Testis (tissue), 5 donors: ENCODE measurements at regions of chr19 and their contacts with region 1.

Region 1: DNA sequence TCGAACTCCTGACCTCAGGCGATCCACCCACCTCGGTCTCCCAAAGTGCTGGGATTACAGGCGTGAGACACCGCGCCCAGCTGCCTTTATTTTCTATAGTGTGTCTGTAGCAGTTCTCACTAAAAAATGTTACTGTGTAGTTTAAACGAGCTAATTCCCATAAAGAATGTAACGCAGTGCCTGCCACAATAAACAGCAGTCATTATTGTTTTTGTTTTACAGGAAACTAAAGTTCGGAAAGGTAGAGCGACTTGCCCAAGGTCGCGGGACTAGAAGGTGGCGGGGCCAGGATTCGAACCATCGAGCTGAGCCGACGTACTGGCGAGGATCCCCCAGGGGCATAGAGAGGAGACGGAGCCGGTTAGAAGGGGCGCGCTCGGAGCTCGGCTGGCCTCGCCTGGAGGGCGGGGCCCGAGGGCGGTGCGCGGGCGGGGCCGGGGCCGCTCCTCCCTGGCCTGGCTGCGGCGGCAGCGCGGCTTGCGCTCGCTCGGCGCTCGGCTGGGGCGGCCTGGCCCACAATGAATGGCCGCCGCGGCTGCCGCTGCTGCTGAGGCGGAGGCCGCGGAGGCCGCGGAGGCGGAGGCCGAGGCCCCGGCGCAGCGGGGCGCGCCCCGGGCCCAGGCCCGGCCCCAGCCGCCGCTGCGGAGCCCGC is at the start of gene NACC1:
- DNase-seq: peak; percentile 93
- H3K4me3 ChIP-seq: peak within 1 kb of the TSS; percentile 78 to 98
- H3K27ac ChIP-seq: peak within 1 kb of the TSS; percentile 62 to 64
- H3K4me1 ChIP-seq: peaks cover 26% of the 10 kb centered on the region
- H3K27me3 ChIP-seq: no peaks in the 10 kb centered on the region
- CTCF ChIP-seq: no peak
- POLR2A ChIP-seq: no peak
- total RNA-seq, gene NACC1: 75.9 to 102 TPM

Region 2: GRCh38 chr19:13051267-13052165 is 66.4 kb before region 1 on chr19:
- intact Hi-C with region 1: no loop called
- DNase-seq: peak; percentile 81
- H3K4me3 ChIP-seq: no peak overlapping the region
- H3K27ac ChIP-seq: peak overlapping the region in 1 of 2 donors; percentile 90
- H3K4me1 ChIP-seq: peaks cover 71% of the 10 kb centered on the region
- H3K27me3 ChIP-seq: no peaks in the 10 kb centered on the region
- CTCF ChIP-seq: no peak
- POLR2A ChIP-seq: no peak

Region 3: DNA sequence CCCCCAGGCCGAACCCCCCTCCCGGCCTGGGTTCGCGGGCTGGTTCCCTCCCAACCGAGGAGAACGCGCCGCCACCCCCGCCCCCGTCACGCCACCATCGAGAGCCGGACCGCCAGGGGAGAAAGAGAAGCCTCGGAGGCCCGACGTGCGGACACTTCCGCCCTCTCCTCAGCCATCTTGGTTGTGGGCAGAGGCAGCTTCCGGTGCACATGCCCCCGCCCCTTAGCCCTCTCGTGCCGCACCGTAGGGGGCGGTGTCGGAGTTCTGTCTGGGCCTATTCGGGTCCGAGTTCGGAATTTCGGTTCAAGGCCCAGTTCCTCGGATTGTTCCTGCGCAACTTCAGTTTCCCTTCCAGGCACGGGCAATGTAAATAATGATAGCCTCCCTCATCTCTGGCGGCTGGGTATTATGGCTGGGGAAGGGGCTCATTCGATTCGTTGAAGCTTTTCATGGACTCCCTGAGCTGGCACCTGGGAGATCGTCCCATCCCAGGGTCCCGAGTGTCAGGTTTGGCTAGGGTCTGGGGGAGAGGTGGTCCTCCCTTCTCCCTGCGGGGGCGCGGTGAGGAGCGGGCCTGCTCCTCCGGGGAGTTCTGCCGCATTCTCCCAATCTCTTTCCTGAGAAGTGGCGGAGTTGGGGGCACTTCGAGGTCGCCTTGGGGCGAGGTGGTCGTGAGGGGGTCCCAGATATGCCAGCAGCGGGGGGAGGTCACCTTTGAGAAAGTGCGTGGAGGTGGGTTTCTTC is 32.5 kb after region 1 on chr19 and contains the starts of genes IER2 and STX10:
- intact Hi-C with region 1: loop called (anchors 5 kb)
- DNase-seq: peak; percentile 97
- H3K4me3 ChIP-seq: peak within 1 kb of the TSS; percentile 73 to 78
- H3K27ac ChIP-seq: peak within 1 kb of the TSS; percentile 83 to 96
- H3K4me1 ChIP-seq: peaks cover 11% of the 10 kb centered on the region
- H3K27me3 ChIP-seq: no peaks in the 10 kb centered on the region
- CTCF ChIP-seq: peak; percentile 40 to 81 (median 64)
- POLR2A ChIP-seq: no peak
- total RNA-seq, gene IER2: 18.1 to 29.4 TPM
- total RNA-seq, gene STX10: 27.2 to 37.6 TPM

Region 4: GRCh38 chr19:13207846-13208671 is 90.2 kb after region 1 on chr19:
- intact Hi-C with region 1: no loop called
- DNase-seq: peak; percentile 39
- H3K4me3 ChIP-seq: peak overlapping the region; percentile 42 to 51
- H3K27ac ChIP-seq: peak overlapping the region; percentile 24 to 66
- H3K4me1 ChIP-seq: no peaks in the 10 kb centered on the region
- H3K27me3 ChIP-seq: no peaks in the 10 kb centered on the region
- CTCF ChIP-seq: no peak
- POLR2A ChIP-seq: no peak